WTC11 (cell line): ENCODE measurements at regions of chr16 and their contacts with region 1.

Region 1: DNA sequence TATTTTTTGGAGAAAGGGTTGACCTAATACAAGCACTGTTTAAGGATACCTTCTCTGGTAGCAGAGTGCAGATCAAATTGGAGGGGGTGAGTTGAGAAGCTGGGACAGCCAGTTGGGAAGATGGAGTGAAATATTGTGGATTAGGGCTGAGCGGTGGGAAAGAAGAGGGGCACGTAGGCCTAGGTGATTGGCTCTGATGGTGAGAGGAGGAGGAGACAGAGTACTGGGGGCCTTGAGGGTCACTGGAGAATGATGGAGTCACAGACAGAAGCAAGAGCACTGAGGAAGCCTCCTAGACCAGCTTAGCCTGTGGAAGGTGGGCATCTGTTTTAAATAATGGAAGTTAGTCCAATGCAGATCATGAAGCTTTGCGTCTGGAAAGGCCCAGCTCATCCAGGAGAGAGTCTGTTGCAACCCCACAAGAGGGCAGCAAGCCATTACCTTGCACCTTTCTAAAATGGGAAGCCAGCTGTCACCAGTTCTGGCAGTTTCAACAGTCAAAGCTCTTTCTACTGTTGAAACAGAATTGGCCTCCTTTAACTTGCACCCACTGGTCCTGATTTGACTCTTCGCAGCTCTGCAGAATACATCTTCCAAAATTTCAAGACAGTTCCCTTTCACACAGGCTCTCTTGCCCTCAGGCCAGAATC is 11.8 kb downstream of the SLC9A5 start:
- DNase-seq: no peak
- ATAC-seq: peak; percentile 67
- H3K4me3 Mint-ChIP-seq: no peak overlapping the region
- H3K27ac Mint-ChIP-seq: no peak overlapping the region
- H3K4me1 Mint-ChIP-seq: peaks cover 4% of the 10 kb centered on the region; the same call in 1 of the 2 replicates
- H3K27me3 Mint-ChIP-seq: no peaks in the 10 kb centered on the region
- CTCF ChIP-seq: no peak

Region 2: DNA sequence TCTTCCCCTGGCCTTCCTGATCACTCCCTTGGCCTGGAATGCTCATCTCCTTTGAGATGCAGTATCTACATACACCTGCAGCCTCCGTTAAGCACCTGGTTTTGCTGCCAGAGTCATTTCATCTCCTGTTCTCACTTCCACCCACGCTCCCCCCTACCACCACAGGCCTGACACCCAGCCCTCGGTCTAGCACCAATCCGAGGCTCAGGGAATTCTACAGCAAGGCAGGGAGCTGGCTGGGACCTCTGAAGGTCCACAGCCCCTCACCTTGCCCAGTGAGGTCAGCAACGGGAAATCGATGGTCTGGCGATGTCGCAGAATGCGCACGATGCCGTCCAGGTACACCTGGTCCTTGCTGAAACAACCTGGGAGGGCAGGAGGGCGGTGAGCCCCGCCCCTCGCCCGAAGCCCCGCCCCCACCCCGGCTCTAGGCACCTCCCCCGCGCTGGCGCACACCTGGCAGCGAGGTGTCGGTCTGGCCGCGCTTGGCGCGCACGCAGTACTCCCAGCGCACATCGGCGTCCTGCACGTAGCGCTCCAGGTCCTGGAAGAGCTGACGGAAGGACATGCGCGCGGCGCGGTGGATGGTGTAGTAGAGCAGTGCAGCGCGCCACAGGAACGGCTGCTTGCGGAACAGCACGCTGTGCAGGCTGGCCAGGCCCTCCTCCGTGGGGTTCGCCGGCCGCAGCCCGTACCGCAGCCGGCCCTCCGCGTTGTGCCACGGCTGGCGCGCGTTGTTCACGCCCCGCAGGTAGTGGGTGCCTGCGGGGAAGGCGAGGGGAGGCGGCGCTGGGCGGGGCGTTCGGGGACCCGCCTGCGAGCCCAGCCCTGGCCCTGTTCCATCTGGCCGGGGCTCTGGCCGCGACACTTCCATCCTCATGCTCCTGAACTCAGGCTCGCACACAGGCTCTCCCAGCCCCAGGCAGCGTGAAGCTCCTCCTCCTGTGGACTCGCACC is 82.5 kb before region 1 on chr16:
- CTCF ChIA-PET with region 1: no interaction called
- POLR2A ChIA-PET with region 1: no interaction called
- DNase-seq: peak; percentile 93
- ATAC-seq: peak; percentile 85
- H3K4me3 Mint-ChIP-seq: peak overlapping the region; percentile 65
- H3K27ac Mint-ChIP-seq: peak overlapping the region; percentile 63; the same call in 1 of the 2 replicates
- H3K4me1 Mint-ChIP-seq: peaks cover 22% of the 10 kb centered on the region
- H3K27me3 Mint-ChIP-seq: peaks cover 54% of the 10 kb centered on the region
- CTCF ChIP-seq: no peak

Region 3: DNA sequence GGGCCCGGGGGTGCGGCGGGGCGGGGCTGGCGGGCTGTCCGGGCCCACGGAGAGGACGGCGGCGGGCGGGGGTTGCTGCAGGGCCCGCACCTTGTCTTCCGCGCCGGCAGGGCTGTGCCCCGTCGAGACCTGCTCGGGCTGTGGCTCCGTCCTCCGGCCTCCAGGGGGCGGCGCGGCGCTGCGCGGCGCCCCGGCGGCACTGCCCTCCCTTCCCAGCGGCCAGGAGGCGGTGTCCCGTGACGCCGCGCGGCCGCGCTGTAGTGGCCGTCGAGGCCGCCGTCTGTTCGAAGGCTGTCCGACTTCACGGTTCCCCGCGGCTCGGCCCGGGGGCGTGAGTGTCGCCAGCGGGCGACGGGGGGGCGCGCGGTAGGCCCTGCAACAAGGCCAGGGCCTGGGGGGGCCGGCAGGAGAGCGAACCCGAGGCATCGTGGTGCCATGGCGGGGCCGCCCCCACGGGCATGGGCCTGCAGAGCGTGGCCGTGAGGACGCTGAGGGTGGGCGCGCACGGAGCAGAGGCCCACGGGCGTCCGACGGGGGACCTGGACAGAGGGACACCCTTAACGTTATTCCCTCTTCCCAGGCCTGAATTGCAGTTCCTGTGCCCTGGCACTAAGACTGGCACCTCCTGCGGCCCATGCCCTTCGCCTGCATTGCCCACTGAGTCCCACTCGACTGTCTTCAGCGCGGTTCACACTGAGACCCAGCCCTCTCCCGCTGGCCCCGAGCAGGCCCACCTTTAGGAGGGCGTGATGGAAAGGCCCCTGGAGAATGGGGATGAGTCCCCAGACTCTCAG is 18.9 kb after region 1 on chr16 and contains the start of gene PLEKHG4:
- CTCF ChIA-PET with region 1: interaction called, 92 read pairs
- POLR2A ChIA-PET with region 1: no interaction called
- DNase-seq: peak; percentile 81
- ATAC-seq: peak; percentile 89
- H3K4me3 Mint-ChIP-seq: peak within 1 kb of the TSS; percentile 69
- H3K27ac Mint-ChIP-seq: no peak within 1 kb of the TSS
- H3K4me1 Mint-ChIP-seq: peaks cover 2% of the 10 kb centered on the region; the same call in 1 of the 2 replicates
- H3K27me3 Mint-ChIP-seq: peaks cover 23% of the 10 kb centered on the region
- CTCF ChIP-seq: peak; percentile 83
- total RNA-seq, gene PLEKHG4: 5.9 to 16.7 TPM (median 15.0 TPM) in 3 replicates

Region 4: DNA sequence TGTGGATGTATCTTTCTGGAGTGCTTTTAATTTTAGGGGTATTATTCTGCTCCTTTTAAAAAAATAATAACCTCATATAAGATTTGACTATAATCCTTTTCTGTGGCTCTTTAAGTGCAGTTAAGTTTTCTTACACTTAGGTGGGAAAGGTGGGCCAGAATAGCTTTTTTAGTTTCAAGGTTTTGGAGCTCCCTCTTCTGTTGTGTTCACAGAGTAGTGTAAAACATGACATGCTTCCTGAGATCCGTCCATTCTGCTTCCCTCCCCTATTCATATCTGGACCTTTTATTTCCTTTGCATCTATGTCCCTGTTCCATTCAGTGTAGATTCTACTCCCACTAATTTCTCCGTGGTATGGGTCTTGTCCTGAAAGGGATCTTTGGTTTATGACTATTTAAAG is 78.9 kb after region 1 on chr16:
- CTCF ChIA-PET with region 1: interaction called, 14 read pairs
- POLR2A ChIA-PET with region 1: no interaction called
- DNase-seq: no peak
- ATAC-seq: no peak
- H3K4me3 Mint-ChIP-seq: no peak overlapping the region
- H3K27ac Mint-ChIP-seq: no peak overlapping the region
- H3K4me1 Mint-ChIP-seq: no peaks in the 10 kb centered on the region
- H3K27me3 Mint-ChIP-seq: peaks cover 15% of the 10 kb centered on the region
- CTCF ChIP-seq: no peak

Region 5: GRCh38 chr16:67470359-67470758 is 209.8 kb after region 1 on chr16:
- CTCF ChIA-PET with region 1: interaction called, 13 read pairs
- POLR2A ChIA-PET with region 1: no interaction called
- DNase-seq: no peak
- ATAC-seq: no peak
- H3K4me3 Mint-ChIP-seq: no peak overlapping the region
- H3K27ac Mint-ChIP-seq: no peak overlapping the region
- H3K4me1 Mint-ChIP-seq: peaks cover 3% of the 10 kb centered on the region
- H3K27me3 Mint-ChIP-seq: no peaks in the 10 kb centered on the region; the same call in 1 of the 2 replicates
- CTCF ChIP-seq: no peak